ENCODE measurements at regions of chr20 and their contacts with region 1.

Region 1: DNA sequence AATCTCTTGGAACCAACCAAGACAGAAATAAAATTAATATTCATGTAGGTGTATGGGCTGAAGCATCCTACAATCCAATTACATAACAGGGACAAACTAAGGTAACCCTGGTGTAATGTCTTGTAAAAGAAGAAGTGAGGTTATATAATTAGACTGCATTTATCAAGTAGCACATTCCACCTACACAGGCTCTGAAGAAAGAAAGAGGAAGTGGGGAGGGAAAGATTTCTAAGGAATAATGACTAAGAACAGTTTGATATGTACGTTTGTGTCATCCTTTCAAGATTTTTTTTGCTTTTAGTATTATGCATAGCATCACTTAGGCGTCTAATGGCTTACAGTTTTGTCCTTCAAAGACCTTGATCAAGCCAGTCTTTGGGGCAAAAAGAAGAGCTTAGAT is 139.7 kb downstream of the PLCB1 start:
- DNase-seq: no peak
- ATAC-seq: no peak
- H3K4me3 ChIP-seq: no peak overlapping the region
- H3K27ac ChIP-seq: no peak overlapping the region
- H3K4me1 ChIP-seq: no peaks in the 10 kb centered on the region
- H3K27me3 ChIP-seq: no peaks in the 10 kb centered on the region
- CTCF ChIP-seq: no peak
- EP300 ChIP-seq: no peak
- POLR2A ChIP-seq: no peak
- RAD21 ChIP-seq: no peak

Region 2: DNA sequence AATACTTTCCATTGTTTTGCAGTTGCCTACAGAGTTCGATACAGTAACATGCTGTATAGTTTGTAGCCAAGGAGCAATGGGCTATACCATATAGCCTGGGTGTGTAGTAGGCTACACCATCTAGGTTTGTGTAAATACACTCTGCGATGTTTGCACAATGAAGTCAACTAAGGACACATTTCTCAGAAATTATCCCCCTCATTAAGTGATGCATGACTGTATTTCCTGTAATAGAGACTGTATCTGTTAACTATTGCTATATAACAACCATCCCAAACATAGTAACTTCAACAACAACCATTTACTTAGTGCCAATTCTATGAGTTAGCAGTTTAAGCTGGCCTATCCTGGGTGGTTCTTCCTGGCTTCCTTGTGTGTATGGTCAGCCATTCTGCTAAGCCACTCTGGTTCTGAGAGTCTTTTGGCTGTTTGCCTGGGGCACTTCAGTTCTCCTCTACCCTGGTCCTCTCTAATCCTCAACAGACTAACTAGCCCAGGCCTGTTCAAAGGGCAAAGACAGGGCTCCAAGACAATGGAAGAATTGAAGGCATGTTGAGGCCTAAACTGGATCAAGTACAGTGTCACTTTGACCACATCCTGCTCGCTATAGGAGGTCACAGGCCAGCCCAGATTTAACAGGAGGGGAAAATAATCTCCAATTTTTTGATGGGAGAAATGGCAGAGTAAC is 15.6 kb before region 1 on chr20:
- CTCF ChIA-PET with region 1: no interaction called
- POLR2A ChIA-PET with region 1: no interaction called
- in situ Hi-C with region 1: no loop called
- intact Hi-C with region 1: loop called (anchors 2 kb)
- DNase-seq: peak; percentile 84
- ATAC-seq: peak; percentile 81
- H3K4me3 ChIP-seq: no peak overlapping the region
- H3K27ac ChIP-seq: peak overlapping the region; percentile 17
- H3K4me1 ChIP-seq: peaks cover 42% of the 10 kb centered on the region
- H3K27me3 ChIP-seq: no peaks in the 10 kb centered on the region
- CTCF ChIP-seq: no peak
- EP300 ChIP-seq: peak in 1 of 2 experiments; percentile 31; a peak in 1 of 4 replicates
- POLR2A ChIP-seq: no peak
- RAD21 ChIP-seq: no peak

Region 3: DNA sequence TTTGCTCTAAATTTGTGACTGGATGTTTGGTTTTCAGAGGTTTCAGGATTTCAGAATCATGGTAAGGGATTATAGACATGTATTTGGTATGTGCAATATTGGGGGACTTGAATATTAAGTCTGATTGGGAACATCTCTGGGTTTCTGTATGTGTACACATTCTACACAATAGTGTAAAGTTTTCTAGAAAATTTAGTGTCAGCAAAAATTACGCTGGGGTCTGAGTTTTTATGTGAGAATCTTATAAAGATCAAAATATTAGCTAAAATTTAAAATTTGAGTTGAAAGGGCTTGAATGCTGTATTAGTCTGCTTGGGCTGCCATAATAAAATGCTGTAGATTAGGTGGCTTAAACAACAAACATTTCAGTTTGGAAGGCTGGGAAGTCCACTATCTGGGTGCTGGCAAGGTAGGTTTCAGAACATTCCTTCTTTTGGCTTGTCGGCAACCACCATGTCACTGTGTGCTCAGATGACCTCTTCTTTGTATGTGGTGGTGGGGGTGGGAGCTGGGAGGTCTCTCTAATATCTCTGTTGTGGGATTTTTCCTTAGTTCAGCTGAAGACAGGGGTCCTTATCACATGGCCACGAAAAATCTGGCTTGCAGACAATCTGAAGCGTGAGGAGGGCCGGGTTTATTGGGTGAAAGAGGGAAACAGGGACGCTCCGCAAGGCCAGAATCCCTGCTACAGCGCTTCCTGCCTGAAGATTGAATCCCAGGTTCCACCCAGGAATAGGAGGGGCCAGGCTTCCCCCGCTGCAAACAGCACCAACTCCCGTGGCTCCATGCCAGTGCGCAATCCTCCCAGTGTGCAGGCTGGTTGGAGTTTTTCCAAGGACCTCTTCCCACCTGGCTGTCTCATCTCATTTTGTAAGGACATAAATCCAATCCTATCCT is 160.1 kb after region 1 on chr20:
- CTCF ChIA-PET with region 1: no interaction called
- POLR2A ChIA-PET with region 1: no interaction called
- in situ Hi-C with region 1: no loop called
- intact Hi-C with region 1: no loop called
- DNase-seq: no peak
- ATAC-seq: no peak
- H3K4me3 ChIP-seq: no peak overlapping the region
- H3K27ac ChIP-seq: no peak overlapping the region
- H3K4me1 ChIP-seq: no peaks in the 10 kb centered on the region
- H3K27me3 ChIP-seq: no peaks in the 10 kb centered on the region
- CTCF ChIP-seq: no peak
- EP300 ChIP-seq: no peak
- POLR2A ChIP-seq: no peak
- RAD21 ChIP-seq: no peak

Region 4: DNA sequence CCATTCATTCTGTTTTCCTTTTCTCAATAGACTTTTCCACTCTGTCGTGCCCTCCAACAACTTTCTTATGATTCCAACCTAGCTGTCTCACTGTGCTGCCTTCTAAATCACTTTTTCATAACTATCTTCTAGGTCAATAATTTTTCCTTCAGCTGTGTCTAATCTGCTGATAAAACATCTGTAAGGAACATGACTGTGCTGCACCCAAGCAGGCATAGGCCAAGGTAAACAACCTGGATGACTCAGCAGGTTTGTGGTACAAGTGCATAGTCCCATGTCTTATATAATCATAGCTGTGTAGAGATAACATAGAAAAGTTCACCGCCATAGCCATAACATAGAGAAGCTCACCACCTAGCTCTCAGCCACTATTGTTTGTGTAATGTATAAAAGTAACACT is 192.6 kb after region 1 on chr20:
- CTCF ChIA-PET with region 1: no interaction called
- POLR2A ChIA-PET with region 1: no interaction called
- in situ Hi-C with region 1: no loop called
- intact Hi-C with region 1: no loop called
- DNase-seq: peak; percentile 66
- ATAC-seq: peak; percentile 38; the same call in 1 of the 3 replicates
- H3K4me3 ChIP-seq: no peak overlapping the region
- H3K27ac ChIP-seq: no peak overlapping the region
- H3K4me1 ChIP-seq: no peaks in the 10 kb centered on the region
- H3K27me3 ChIP-seq: no peaks in the 10 kb centered on the region
- CTCF ChIP-seq: no peak
- EP300 ChIP-seq: peak in 1 of 2 experiments; percentile 49; a peak in 1 of 4 replicates
- POLR2A ChIP-seq: no peak
- RAD21 ChIP-seq: no peak